Head of caudate nucleus (tissue), 42 donors: ENCODE measurements at regions of chr5 and their contacts with region 1.

Region 1: GRCh38 chr5:57216714-57217113 is 42.9 kb downstream of the GPBP1 start:
- DNase-seq: no peak

Region 2: DNA sequence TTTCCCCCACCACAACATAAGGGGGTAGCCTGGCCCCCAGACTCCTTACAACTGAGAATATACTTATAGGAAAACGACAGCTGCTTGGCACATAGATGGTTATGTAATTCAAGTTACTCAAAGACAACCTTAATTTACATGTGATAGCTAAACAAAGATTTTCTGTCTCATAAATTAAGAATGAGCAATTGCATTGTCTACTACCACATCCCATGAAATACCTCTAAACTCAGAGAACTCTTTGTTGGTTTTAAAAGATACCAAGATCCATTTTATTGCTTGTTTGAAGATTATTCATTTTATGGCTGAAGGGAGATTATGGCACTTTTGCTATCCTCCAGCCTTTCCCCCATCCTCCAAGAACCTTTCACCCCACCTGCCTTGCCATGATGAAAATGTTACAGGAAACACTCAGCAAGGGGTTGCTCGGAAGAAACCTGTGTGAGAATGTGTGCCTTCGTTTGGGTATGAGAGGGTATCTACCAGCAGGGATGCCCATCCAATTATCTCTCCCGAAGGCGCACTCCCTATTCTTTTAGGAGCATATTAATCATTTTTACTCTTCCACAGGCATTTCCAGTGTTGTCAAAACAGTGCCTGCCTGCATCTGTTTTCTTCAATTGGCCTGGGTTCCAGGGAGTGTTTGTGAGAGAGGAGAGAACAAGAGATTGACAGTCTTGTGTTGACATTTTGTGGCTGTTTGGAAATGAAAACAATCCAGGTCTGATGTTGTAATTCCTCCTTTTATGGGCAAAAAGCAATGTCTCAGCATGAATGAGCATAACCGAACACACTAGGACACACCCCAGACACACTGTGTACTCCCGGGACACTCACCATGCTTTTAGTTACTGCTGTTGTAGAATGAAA is 775.6 kb before region 1 on chr5:
- intact Hi-C with region 1: no loop called
- DNase-seq: no peak

Region 3: DNA sequence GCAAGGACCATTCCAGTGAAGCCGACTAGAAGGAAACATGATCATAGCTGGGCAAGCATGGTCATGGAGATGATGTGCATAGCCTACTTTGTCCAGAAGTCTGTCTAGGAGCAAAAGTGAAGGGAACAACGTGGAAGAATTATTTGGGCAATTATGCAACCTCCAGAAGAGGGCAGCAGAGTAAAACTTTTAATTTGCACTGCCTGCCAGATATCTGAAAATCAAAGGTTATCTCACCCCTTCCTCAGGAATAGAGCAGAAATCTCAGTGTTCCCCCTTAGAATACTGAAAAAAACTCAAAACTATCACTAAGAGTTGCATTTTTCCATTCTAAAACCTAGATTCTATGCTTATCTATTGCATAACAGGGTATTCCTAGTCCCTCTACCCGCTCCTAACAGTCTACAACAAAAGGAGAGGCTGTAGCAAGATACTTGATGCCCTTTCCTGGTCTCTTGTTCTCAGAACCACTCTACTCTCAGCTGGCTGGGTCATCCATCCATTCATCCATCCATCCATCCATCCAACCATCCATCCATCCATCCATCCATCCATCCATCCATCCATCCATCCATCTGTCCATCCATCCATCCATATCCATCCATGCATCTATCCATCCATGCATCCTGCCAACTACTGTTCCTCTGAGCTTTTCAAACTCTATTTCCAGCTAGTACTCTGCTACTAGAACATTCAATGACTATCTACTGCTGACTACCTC is 315.7 kb before region 1 on chr5:
- intact Hi-C with region 1: loop called (anchors 5 kb)
- DNase-seq: peak in 20 of 42 donors; percentile 12 to 76 (median 42)

Region 4: DNA sequence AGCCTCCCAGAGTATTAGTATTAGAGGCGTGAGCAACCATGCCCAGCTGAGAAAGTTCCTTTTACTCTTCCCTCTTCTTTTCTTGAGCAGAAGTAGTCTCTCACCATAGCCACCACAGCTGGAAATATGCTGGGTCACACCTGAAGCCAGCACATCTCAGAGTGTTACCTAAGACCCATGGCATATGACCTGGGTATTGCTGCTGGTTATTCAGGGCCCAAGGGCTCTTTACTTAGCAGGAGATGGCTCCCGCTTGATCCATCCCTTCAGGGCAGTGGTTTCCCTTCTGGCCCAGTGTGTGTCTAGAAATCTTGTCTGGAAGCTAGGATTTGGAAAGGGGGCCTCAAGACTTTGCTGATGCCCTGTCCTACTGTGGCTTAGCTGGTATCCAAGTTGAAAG is 66.0 kb before region 1 on chr5:
- intact Hi-C with region 1: no loop called
- DNase-seq: no peak

Region 5: DNA sequence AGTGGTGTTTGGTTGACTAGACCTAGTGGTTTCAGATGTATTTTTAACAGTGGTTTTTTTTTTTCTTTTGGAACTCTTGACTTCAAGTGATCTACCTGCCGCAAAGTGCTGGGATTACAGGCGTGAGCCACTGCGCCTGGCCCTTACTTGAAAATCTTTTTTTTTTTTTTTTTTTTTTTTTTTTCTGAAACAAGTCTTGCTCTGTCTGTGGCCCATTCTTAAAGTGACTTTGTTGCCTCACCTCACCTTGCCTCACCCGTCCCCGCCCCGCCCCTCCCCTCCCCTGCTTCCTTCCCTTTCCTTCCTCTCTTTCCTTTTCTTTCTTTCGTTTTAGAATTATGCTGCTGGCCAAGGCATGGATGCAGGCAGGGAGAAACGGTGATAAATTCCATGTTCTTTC is 16.8 kb before region 1 on chr5:
- intact Hi-C with region 1: no loop called
- DNase-seq: no peak

Region 6: GRCh38 chr5:57499262-57500050 is 282.7 kb after region 1 on chr5:
- intact Hi-C with region 1: no loop called
- DNase-seq: peak in 32 of 42 donors; percentile 10 to 76 (median 44)